Caco-2 (cell line): ENCODE measurements at regions of chr11 and their contacts with region 1.

Region 1: GRCh38 chr11:60913793-60914632 is at the start of gene TMEM109:
- DNase-seq: peak; percentile 89 to 92
- H3K4me3 ChIP-seq: peak within 1 kb of the TSS; percentile 77
- H3K4me3 Mint-ChIP-seq: peak within 1 kb of the TSS; percentile 92
- H3K27ac Mint-ChIP-seq: peak within 1 kb of the TSS; percentile 91
- H3K4me1 ChIP-seq: peaks cover 26% of the 10 kb centered on the region
- H3K4me1 Mint-ChIP-seq: peaks cover 7% of the 10 kb centered on the region
- H3K27me3 ChIP-seq: no peaks in the 10 kb centered on the region
- H3K27me3 Mint-ChIP-seq: peaks cover 3% of the 10 kb centered on the region
- CTCF ChIP-seq: no peak
- total RNA-seq, gene TMEM109: 82.3 and 91.9 TPM in 2 replicates

Region 2: DNA sequence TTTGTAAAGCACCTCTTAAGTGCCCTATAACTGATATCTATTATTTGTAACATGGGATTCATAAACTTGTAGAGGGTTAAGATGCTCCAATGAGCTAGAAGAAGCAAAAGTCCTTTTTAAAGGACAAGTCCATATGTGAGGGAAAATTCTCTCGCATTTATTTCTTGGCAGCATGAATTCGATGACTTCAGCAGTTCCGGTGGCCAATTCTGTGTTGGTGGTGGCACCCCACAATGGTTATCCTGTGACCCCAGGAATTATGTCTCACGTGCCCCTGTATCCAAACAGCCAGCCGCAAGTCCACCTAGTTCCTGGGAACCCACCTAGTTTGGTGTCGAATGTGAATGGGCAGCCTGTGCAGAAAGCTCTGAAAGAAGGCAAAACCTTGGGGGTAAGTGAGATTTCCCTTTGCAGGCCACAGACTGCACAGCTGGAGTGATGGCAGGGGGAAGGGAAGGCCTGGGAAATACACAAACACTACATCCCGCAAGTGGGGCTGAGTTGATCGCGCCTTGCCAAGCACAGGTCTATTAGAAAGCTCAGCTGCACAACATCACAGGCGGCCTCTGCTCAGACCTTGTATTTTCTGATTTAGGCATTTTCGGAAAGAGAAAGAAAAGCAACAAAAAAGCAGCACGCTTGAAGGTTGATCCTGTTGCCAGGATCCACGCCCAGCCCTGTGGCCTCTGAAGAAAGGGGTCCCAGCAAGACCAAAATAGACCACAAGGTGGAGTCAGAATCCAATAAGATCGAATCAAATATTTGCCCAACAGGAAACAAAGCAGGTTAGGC is 213.1 kb before region 1 on chr11:
- CTCF ChIA-PET with region 1: no interaction called
- POLR2A ChIA-PET with region 1: no interaction called
- intact Hi-C with region 1: no loop called
- DNase-seq: peak; percentile 56 to 75
- H3K4me3 ChIP-seq: no peak overlapping the region
- H3K4me3 Mint-ChIP-seq: no peak overlapping the region
- H3K27ac Mint-ChIP-seq: no peak overlapping the region
- H3K4me1 ChIP-seq: peaks cover 7% of the 10 kb centered on the region; the same call in 1 of the 2 replicates
- H3K4me1 Mint-ChIP-seq: peaks cover 16% of the 10 kb centered on the region
- H3K27me3 ChIP-seq: no peaks in the 10 kb centered on the region
- H3K27me3 Mint-ChIP-seq: no peaks in the 10 kb centered on the region
- CTCF ChIP-seq: peak; percentile 71 to 80

Region 3: GRCh38 chr11:60899046-60899936 is 14.7 kb before region 1 on chr11:
- CTCF ChIA-PET with region 1: interaction called, 10 read pairs
- POLR2A ChIA-PET with region 1: interaction called, 3 read pairs
- intact Hi-C with region 1: no loop called
- DNase-seq: peak in 1 of 2 experiments; percentile 71
- H3K4me3 ChIP-seq: no peak overlapping the region
- H3K4me3 Mint-ChIP-seq: no peak overlapping the region
- H3K27ac Mint-ChIP-seq: no peak overlapping the region
- H3K4me1 ChIP-seq: no peaks in the 10 kb centered on the region
- H3K4me1 Mint-ChIP-seq: no peaks in the 10 kb centered on the region
- H3K27me3 ChIP-seq: no peaks in the 10 kb centered on the region
- H3K27me3 Mint-ChIP-seq: no peaks in the 10 kb centered on the region
- CTCF ChIP-seq: peak; percentile 92 to 95

Region 4: GRCh38 chr11:60924110-60924905 is 10.3 kb after region 1 on chr11 and contains the start of gene TMEM132A:
- CTCF ChIA-PET with region 1: no interaction called
- POLR2A ChIA-PET with region 1: interaction called, 12 read pairs
- intact Hi-C with region 1: loop called (anchors 1 kb)
- DNase-seq: peak; percentile 85 to 87
- H3K4me3 ChIP-seq: peak within 1 kb of the TSS; percentile 71
- H3K4me3 Mint-ChIP-seq: peak within 1 kb of the TSS; percentile 90
- H3K27ac Mint-ChIP-seq: peak within 1 kb of the TSS; percentile 59
- H3K4me1 ChIP-seq: peaks cover 13% of the 10 kb centered on the region
- H3K4me1 Mint-ChIP-seq: peaks cover 13% of the 10 kb centered on the region
- H3K27me3 ChIP-seq: no peaks in the 10 kb centered on the region
- H3K27me3 Mint-ChIP-seq: no peaks in the 10 kb centered on the region
- CTCF ChIP-seq: peak in 1 of 2 experiments; percentile 18
- total RNA-seq, gene TMEM132A: 86.6 and 97.3 TPM in 2 replicates